ENCODE measurements at regions of chr19 and their contacts with region 1.

Region 1: GRCh38 chr19:36772311-36773222 is at the start of gene ZNF850:
- DNase-seq: peak; percentile 96
- H3K4me3 ChIP-seq: peak within 1 kb of the TSS; percentile 93
- H3K27ac ChIP-seq: peak within 1 kb of the TSS; percentile 66
- H3K4me1 ChIP-seq: no peaks in the 10 kb centered on the region
- H3K27me3 ChIP-seq: no peaks in the 10 kb centered on the region
- CTCF ChIP-seq: no peak
- total RNA-seq, gene ZNF850: 1.1 to 3.1 TPM

Region 2: GRCh38 chr19:36627057-36627456 is 145.5 kb before region 1 on chr19:
- intact Hi-C with region 1: no loop called
- DNase-seq: no peak
- H3K4me3 ChIP-seq: no peak overlapping the region
- H3K27ac ChIP-seq: no peak overlapping the region
- H3K4me1 ChIP-seq: no peaks in the 10 kb centered on the region
- H3K27me3 ChIP-seq: no peaks in the 10 kb centered on the region
- CTCF ChIP-seq: no peak

Region 3: GRCh38 chr19:36797786-36798108 is 25.2 kb after region 1 on chr19:
- intact Hi-C with region 1: no loop called
- DNase-seq: no peak
- H3K4me3 ChIP-seq: peak overlapping the region; percentile 64
- H3K27ac ChIP-seq: no peak overlapping the region
- H3K4me1 ChIP-seq: no peaks in the 10 kb centered on the region
- H3K27me3 ChIP-seq: no peaks in the 10 kb centered on the region
- CTCF ChIP-seq: no peak

Region 4: GRCh38 chr19:36837906-36838783 is 65.6 kb after region 1 on chr19 and contains the start of gene ZNF790:
- intact Hi-C with region 1: loop called (anchors 10 kb)
- DNase-seq: peak; percentile 91
- H3K4me3 ChIP-seq: peak within 1 kb of the TSS; percentile 79
- H3K27ac ChIP-seq: peak within 1 kb of the TSS; percentile 87
- H3K4me1 ChIP-seq: no peaks in the 10 kb centered on the region
- H3K27me3 ChIP-seq: no peaks in the 10 kb centered on the region
- CTCF ChIP-seq: no peak
- total RNA-seq, gene ZNF790: 3.1 to 3.9 TPM

Measured in colonic mucosa (tissue), 4 donors.